ENCODE measurements at regions of chr1 and their contacts with region 1.

Region 1: GRCh38 chr1:240555524-240555923 is 56.4 kb downstream of the GREM2 start:
- DNase-seq: no peak
- H3K4me3 ChIP-seq: no peak overlapping the region
- CTCF ChIP-seq: no peak
- POLR2A ChIP-seq: no peak

Region 2: GRCh38 chr1:240587791-240588190 is 32.3 kb after region 1 on chr1:
- intact Hi-C with region 1: loop called (anchors 1 kb)
- DNase-seq: peak in 1 of 2 donors; percentile 14
- H3K4me3 ChIP-seq: no peak overlapping the region
- CTCF ChIP-seq: no peak
- POLR2A ChIP-seq: no peak